ENCODE measurements at regions of chr4 and their contacts with region 1.

Region 1: GRCh38 chr4:158809611-158810486 is 41.0 kb downstream of the FNIP2 start:
- DNase-seq: no peak
- ATAC-seq: peak; percentile 81
- H3K4me3 Mint-ChIP-seq: peak overlapping the region; percentile 28
- H3K27ac Mint-ChIP-seq: peak overlapping the region; percentile 71
- H3K4me1 Mint-ChIP-seq: peaks cover 35% of the 10 kb centered on the region
- H3K27me3 Mint-ChIP-seq: no peaks in the 10 kb centered on the region

Region 2: DNA sequence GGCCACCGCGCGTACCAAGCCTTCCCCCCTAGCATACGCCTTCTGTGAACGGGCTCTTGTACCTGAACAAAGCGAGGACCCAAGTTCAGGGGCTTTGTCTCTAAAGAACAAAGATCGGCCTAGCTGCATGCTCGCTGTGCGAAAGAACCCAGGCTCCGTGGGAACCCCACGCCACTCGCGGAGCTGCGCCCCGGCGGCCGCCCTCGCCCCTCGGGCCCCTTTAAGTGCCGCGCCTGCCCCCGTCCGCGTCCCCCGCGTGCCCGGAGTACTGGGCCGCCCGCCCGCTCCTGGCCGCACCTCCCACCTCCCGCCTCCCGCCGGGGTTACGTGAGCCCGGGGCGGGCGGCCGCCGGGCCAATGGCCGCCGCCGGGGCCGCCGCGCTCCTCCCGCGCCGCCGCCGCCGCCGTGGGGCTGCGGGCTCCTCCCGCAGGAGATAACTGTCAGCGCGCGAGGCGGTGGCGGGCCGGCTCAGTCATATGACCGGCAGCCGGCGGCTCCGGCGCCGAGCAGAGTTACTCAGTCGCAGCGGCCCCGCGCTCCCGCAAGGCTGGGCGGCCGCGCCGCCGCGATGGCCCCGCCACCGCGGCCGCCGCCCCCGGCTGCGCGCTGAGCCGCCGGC is 41.2 kb before region 1 on chr4 and contains the start of gene FNIP2:
- CTCF ChIA-PET with region 1: no interaction called
- POLR2A ChIA-PET with region 1: interaction called, 6 read pairs
- intact Hi-C with region 1: loop called (anchors 1 to 5 kb)
- DNase-seq: peak; percentile 81
- ATAC-seq: peak; percentile 81
- H3K4me3 Mint-ChIP-seq: peak within 1 kb of the TSS; percentile 97
- H3K27ac Mint-ChIP-seq: peak within 1 kb of the TSS; percentile 93
- H3K4me1 Mint-ChIP-seq: peaks cover 41% of the 10 kb centered on the region
- H3K27me3 Mint-ChIP-seq: no peaks in the 10 kb centered on the region
- total RNA-seq, gene FNIP2: 11.6 to 13.0 TPM

Region 3: DNA sequence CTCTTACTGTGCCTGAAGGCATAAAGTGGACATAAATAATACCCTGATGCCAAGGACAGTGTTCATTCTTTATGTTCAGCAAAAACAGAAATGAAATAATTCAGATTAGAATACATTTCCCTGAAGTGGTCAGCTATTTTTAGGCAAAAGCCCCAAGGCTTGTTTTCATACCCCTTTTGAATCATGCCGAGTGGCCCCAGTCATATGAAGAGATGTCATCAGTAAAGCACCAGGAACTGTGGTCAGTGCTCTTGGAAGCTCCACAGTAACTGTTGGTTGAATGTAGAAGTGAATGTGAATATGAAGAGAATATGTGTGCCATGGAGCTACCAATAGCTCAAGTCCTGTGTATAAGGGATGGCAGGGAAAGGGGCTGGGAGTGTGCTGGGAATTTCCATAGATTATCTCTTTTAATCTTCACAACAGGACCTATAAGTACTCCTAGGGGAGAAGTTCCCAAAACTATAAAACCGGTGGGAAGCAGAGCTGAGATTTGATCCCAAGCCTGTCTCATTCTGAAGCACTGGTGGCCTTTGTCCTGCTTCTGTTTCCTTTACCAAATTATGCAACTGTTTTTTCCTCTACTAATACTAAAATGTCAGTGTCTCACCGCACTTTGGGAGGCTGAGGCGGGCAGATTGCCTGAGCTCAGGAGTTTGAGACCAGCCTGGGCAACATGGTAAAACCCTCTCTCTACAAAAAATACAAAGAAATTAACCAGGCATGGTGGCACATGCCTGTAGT is 11.6 kb after region 1 on chr4:
- CTCF ChIA-PET with region 1: interaction called, 15 read pairs
- POLR2A ChIA-PET with region 1: no interaction called
- intact Hi-C with region 1: loop called in 1 of 2 experiments (anchors 1 kb)
- DNase-seq: peak; percentile 43
- ATAC-seq: peak; percentile 47
- H3K4me3 Mint-ChIP-seq: no peak overlapping the region
- H3K27ac Mint-ChIP-seq: peak overlapping the region; percentile 58
- H3K4me1 Mint-ChIP-seq: peaks cover 67% of the 10 kb centered on the region
- H3K27me3 Mint-ChIP-seq: no peaks in the 10 kb centered on the region

Region 4: DNA sequence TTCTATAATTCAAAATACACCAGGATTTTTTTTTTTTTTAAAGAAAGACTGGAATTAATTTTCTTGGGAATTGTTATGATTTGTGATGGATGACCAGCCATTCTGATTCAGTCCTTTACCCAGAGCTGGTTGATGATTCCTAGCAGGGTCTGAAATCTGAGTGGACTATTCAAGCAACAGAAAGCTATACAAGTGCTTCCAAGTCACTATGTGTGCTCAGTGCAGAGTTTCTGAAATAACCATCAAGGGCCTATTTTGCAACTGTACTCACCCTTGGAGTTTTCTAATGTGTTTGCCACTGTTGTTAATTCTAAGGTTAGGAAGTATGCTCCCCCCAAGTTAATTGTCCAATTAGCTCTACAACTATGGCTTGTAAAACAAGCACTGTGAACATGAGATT is 155.4 kb after region 1 on chr4:
- CTCF ChIA-PET with region 1: no interaction called
- POLR2A ChIA-PET with region 1: no interaction called
- intact Hi-C with region 1: no loop called
- DNase-seq: no peak
- ATAC-seq: no peak
- H3K4me3 Mint-ChIP-seq: no peak overlapping the region
- H3K27ac Mint-ChIP-seq: no peak overlapping the region
- H3K4me1 Mint-ChIP-seq: no peaks in the 10 kb centered on the region
- H3K27me3 Mint-ChIP-seq: peaks cover 2% of the 10 kb centered on the region